ENCODE measurements at regions of chr11 and their contacts with region 1.

Region 1: GRCh38 chr11:9565822-9566560 is 7.5 kb upstream of the WEE1 start:
- DNase-seq: peak in 1 of 2 donors; percentile 57
- ATAC-seq: peak; percentile 48 to 93 (median 78)
- H3K4me3 ChIP-seq: no peak overlapping the region
- H3K27ac ChIP-seq: peak overlapping the region; percentile 77 to 94 (median 86)
- H3K4me1 ChIP-seq: peaks cover 9 to 49% (median 39%) of the 10 kb centered on the region in 9 donors
- H3K27me3 ChIP-seq: no peaks in the 10 kb centered on the region
- CTCF ChIP-seq: no peak

Region 2: DNA sequence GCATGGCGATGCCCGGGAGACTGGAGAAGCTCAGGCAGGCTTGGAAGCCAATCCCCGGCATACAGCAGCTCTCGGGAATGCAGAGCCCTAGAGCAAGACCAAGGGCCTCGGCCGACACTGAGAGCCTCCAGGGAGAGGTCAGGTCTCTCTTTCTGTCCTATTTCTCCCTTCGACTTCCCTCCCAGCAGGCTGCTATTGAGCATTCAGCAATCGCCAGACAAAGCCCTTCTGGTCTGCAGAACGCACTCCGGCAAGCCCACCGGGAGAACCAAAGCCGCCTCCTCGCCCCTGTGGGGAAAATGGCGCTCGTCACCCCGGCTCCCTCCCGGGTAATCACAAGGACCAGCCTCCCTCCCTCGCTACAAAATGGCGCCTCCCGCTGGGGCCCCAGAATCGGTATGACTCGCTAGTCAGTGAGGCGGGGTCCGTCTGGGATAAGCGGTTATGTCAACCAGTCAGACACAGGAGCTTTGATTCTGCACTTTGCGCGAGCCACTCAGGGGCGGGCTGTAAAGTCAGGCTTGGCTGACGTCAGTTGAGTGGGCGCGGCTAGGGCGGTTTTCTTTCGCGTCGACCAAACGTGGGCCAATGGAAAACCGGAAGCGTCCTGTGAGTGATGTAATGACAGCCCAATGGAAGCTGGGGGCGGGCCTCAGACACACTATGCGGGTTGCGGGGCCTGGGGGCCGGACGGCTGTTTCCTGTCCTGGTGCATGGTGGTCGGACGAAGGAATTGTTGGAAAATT is 105.5 kb before region 1 on chr11 and contains the start of gene ZNF143:
- intact Hi-C with region 1: loop called in 2 of 10 experiments (anchors 5 kb)
- DNase-seq: peak; percentile 100
- ATAC-seq: peak; percentile 94 to 98 (median 97)
- H3K4me3 ChIP-seq: peak within 1 kb of the TSS; percentile 71 to 99 (median 80)
- H3K27ac ChIP-seq: peak within 1 kb of the TSS; percentile 97 to 100 (median 98)
- H3K4me1 ChIP-seq: peaks cover 3 to 29% (median 21%) of the 10 kb centered on the region in 9 donors
- H3K27me3 ChIP-seq: no peaks in the 10 kb centered on the region
- CTCF ChIP-seq: no peak
- total RNA-seq, gene ZNF143: 11.7 to 28.8 (median 17.6) TPM